HEK293 (cell line): ENCODE measurements at regions of chr1 and their contacts with region 1.

Region 1: DNA sequence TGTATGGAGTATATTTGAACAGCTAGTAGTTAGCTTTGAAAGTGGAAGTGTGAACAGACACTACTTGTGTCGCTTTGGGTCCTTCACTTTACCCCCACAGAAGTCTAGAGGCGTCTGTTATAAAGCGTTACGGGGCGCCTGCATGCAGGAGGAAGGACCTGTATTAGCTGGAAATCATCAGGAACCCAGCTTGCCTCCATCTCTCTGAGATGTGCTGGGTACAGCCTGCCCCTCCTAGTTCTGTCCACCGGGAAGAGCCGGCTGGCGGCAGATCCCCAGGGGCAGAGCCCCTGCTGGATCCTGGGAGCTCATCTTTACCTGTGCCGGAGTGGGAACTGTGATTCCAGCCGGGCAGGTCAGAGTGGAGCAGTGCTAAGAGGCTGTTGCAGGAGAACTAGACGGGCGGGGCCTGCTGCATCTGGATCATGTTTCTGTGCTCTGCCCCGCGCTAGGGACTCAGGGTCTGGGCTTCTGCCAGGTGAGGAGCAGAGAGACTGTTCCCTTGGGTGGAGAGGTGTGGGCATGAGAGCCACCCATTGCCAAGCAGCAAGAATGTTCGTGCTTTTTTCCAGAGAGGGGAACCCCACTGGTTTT is 22.3 kb upstream of the SPSB1 start:
- H3K4me3 ChIP-seq: no peak overlapping the region
- H3K27ac ChIP-seq: no peak overlapping the region
- H3K4me1 ChIP-seq: peaks cover 4% of the 10 kb centered on the region
- CTCF ChIP-seq: no peak

Region 2: GRCh38 chr1:9081473-9081872 is 188.9 kb before region 1 on chr1:
- CTCF ChIA-PET with region 1: no interaction called
- POLR2A ChIA-PET with region 1: no interaction called
- H3K4me3 ChIP-seq: no peak overlapping the region
- H3K27ac ChIP-seq: no peak overlapping the region
- H3K4me1 ChIP-seq: peaks cover 4% of the 10 kb centered on the region
- CTCF ChIP-seq: no peak

Region 3: GRCh38 chr1:9449106-9449627 is 178.8 kb after region 1 on chr1:
- CTCF ChIA-PET with region 1: interaction called, 15 read pairs
- POLR2A ChIA-PET with region 1: no interaction called
- H3K4me3 ChIP-seq: no peak overlapping the region
- H3K27ac ChIP-seq: no peak overlapping the region
- H3K4me1 ChIP-seq: peaks cover 6% of the 10 kb centered on the region; the same call in 1 of the 2 replicates
- CTCF ChIP-seq: no peak

Region 4: DNA sequence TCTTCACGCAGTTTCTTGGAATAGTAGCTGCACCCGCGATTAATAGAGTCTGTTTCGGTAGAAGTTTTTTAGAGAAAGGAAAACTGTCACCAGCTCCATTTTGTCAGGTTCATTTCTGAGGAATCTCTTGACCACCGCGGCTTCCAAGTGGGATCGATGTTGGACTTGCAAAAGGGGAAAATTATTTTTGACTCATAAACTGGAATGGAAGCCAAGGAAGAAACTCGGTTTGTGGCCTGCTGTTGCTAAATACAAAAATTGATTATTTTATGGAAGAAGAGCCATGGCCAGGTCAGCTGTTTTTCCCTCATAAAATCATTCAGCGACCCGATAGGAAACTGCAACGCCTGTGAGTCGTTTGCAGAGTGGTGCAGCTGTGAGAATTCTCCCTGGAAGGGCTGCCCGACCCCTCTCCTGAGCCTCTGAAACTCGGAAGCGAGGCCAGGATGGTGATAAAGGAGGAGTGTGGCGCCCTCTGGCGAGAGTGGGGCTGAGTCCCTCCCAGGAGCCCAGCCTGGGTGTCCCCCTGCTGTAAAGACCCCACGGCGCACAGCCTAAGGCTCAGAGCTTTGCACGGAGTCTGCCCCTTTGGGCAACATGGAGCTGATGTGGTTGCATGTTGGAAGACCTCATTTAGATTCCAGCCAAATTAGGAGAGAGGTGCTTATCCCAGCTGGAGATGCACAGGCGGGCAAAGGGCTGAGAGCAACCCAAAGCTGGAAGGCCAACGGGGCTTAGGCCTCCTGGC is 185.3 kb after region 1 on chr1:
- CTCF ChIA-PET with region 1: interaction called, 19 read pairs
- POLR2A ChIA-PET with region 1: no interaction called
- H3K4me3 ChIP-seq: no peak overlapping the region
- H3K27ac ChIP-seq: no peak overlapping the region
- H3K4me1 ChIP-seq: no peaks in the 10 kb centered on the region
- CTCF ChIP-seq: peak; percentile 44; the same call in 1 of the 2 replicates